Gastrocnemius medialis (tissue), 4 donors: ENCODE measurements at regions of chr10 and their contacts with region 1.

Region 1: GRCh38 chr10:116287906-116288501 is 15.0 kb upstream of the GFRA1 start:
- DNase-seq: no peak
- ATAC-seq: peak in 1 of 2 donors; percentile 54
- H3K4me3 ChIP-seq: no peak overlapping the region
- H3K27ac ChIP-seq: no peak overlapping the region
- H3K4me1 ChIP-seq: no peaks in the 10 kb centered on the region
- H3K27me3 ChIP-seq: no peaks in the 10 kb centered on the region
- CTCF ChIP-seq: peak; percentile 18 to 56 (median 41)
- POLR2A ChIP-seq: no peak

Region 2: DNA sequence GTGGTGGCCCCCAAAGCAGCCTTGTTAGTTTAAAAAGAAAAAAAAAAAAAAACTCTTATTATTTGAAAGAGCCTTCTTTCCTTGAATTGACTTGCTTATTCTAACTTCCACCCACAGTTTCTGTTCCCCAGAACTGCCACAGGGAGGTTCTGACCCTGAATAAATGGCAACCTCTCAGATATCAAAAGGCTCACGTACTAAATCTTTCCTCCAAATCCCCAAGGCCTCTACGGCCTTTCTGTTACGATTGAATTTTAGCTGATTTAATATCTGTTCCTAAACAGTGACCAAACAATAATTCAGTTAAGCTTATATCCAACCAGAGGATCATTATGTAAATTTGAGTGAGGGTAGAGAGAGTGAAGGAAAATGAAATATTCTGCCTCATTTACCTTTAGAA is 497.8 kb before region 1 on chr10:
- in situ Hi-C with region 1: loop called in 2 of 4 experiments (anchors 5 to 10 kb)
- intact Hi-C with region 1: loop called (anchors 5 kb)
- DNase-seq: no peak
- ATAC-seq: no peak
- H3K4me3 ChIP-seq: no peak overlapping the region
- H3K27ac ChIP-seq: no peak overlapping the region
- H3K4me1 ChIP-seq: no peaks in the 10 kb centered on the region
- H3K27me3 ChIP-seq: no peaks in the 10 kb centered on the region
- CTCF ChIP-seq: no peak
- POLR2A ChIP-seq: no peak

Region 3: GRCh38 chr10:115795964-115796363 is 492.0 kb before region 1 on chr10:
- in situ Hi-C with region 1: loop called (anchors 5 to 25 kb)
- intact Hi-C with region 1: loop called (anchors 5 kb)
- DNase-seq: no peak
- ATAC-seq: no peak
- H3K4me3 ChIP-seq: no peak overlapping the region
- H3K27ac ChIP-seq: no peak overlapping the region
- H3K4me1 ChIP-seq: no peaks in the 10 kb centered on the region
- H3K27me3 ChIP-seq: no peaks in the 10 kb centered on the region
- CTCF ChIP-seq: no peak
- POLR2A ChIP-seq: no peak

Region 4: GRCh38 chr10:115801992-115802391 is 486.0 kb before region 1 on chr10:
- in situ Hi-C with region 1: loop called (anchors 5 to 25 kb)
- intact Hi-C with region 1: loop called (anchors 5 kb)
- DNase-seq: no peak
- ATAC-seq: no peak
- H3K4me3 ChIP-seq: no peak overlapping the region
- H3K27ac ChIP-seq: no peak overlapping the region
- H3K4me1 ChIP-seq: no peaks in the 10 kb centered on the region
- H3K27me3 ChIP-seq: no peaks in the 10 kb centered on the region
- CTCF ChIP-seq: no peak
- POLR2A ChIP-seq: no peak

Region 5: GRCh38 chr10:115818012-115818411 is 470.0 kb before region 1 on chr10:
- in situ Hi-C with region 1: loop called in 1 of 4 experiments (anchors 25 kb)
- intact Hi-C with region 1: no loop called
- DNase-seq: no peak
- ATAC-seq: no peak
- H3K4me3 ChIP-seq: no peak overlapping the region
- H3K27ac ChIP-seq: no peak overlapping the region
- H3K4me1 ChIP-seq: no peaks in the 10 kb centered on the region
- H3K27me3 ChIP-seq: no peaks in the 10 kb centered on the region
- CTCF ChIP-seq: no peak
- POLR2A ChIP-seq: no peak

Region 6: GRCh38 chr10:115948465-115948864 is 339.5 kb before region 1 on chr10:
- in situ Hi-C with region 1: loop called in 2 of 4 experiments (anchors 10 to 25 kb)
- intact Hi-C with region 1: no loop called
- DNase-seq: no peak
- ATAC-seq: peak in 1 of 2 donors; percentile 33
- H3K4me3 ChIP-seq: no peak overlapping the region
- H3K27ac ChIP-seq: no peak overlapping the region
- H3K4me1 ChIP-seq: no peaks in the 10 kb centered on the region
- H3K27me3 ChIP-seq: no peaks in the 10 kb centered on the region
- CTCF ChIP-seq: peak in 1 of 5 experiments; percentile 29
- POLR2A ChIP-seq: no peak

Region 7: DNA sequence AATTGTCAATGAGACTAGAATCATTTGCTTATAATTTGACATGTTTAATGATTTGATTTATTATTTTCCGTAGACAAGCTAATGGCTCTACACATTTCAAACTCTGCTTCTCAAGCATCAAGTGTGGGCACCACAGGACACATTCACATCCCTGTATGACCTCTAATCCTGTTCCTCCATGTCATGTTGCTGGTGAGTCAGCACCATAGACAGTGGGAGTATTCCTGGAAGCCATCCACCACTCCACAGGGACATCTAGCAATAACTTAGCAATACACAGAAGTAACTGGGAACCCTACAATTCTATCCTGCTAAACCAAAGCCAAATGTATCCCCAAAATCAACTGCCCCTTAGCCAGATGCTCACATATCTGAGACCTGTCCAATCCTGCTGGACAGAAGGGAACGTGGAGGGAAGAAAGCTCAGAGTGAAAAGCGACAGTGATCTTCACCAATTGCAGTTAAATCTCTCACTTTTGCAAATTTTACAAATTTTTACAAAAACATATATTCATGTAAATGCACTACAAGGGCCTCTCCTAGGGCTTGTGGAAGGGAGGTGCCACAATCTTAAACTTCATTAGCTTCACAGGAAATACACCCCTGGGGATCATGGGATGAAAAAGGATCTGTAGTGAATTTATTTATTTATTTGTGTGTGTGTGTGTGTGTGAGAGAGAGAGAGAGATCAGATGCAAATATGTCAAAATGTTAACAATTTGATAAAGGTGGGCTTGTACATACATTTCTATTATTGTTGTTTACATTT is 141.4 kb before region 1 on chr10:
- in situ Hi-C with region 1: no loop called
- intact Hi-C with region 1: no loop called
- DNase-seq: no peak
- ATAC-seq: no peak
- H3K4me3 ChIP-seq: no peak overlapping the region
- H3K27ac ChIP-seq: no peak overlapping the region
- H3K4me1 ChIP-seq: no peaks in the 10 kb centered on the region
- H3K27me3 ChIP-seq: no peaks in the 10 kb centered on the region
- CTCF ChIP-seq: no peak
- POLR2A ChIP-seq: no peak